HEK293T (cell line): ENCODE measurements at regions of chr7 and their contacts with region 1.

Region 1: GRCh38 chr7:151028131-151028947 is at the start of gene ABCB8:
- DNase-seq: peak; percentile 100

Region 2: GRCh38 chr7:151008511-151009323 is 19.6 kb before region 1 on chr7:
- CTCF ChIA-PET with region 1: interaction called, 5 read pairs
- POLR2A ChIA-PET with region 1: interaction called, 10 read pairs
- DNase-seq: peak; percentile 55

Region 3: GRCh38 chr7:151017953-151018420 is 10.4 kb before region 1 on chr7:
- CTCF ChIA-PET with region 1: interaction called, 40 read pairs
- POLR2A ChIA-PET with region 1: interaction called, 30 read pairs
- DNase-seq: peak; percentile 95

Region 4: DNA sequence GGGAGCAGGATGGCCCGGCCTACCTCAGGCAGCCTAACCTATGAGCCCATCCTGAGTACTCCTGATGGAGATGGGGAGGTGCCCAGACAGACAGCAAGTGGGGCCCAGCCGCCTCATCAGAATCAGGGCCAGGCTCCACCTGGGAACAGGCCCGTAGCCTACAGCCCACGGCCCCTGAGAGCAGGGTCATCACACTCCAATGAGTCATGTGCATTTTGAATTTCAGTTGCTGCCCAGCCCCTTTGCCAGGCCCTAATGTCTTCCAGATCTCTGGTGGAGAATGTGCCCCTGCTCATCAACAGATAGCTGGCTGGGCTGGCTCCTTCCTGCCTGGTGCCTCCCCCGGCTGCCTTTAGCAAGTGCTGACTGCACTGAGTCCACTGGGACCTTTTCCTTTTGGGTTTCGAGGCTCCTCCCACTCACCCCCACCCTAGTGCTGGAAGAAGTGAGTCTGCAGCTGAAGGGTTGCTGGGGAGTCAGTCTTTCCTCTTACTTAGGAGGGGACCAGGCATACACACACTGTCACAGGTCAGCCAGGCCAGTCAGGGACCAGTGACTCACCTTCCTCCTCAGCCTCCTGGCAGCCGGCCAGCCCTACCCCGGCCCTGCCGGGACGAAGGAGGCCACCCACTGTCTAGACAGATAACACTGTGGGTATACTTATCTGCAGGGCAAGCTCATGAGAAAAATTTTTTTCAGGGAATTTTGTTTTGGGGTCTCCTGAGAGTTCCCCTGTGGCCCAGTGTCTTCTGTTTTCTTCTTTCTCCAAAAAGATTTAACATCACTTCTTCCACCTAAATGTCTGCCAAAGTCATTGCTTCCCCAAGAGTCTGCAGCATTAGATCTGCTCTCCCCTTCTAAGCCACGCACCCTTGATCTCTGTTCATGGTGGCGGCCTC is 10.9 kb after region 1 on chr7:
- CTCF ChIA-PET with region 1: interaction called, 3 read pairs
- POLR2A ChIA-PET with region 1: interaction called, 23 read pairs
- DNase-seq: peak; percentile 72

Region 5: GRCh38 chr7:151057989-151058780 is 29.8 kb after region 1 on chr7:
- CTCF ChIA-PET with region 1: no interaction called
- POLR2A ChIA-PET with region 1: interaction called, 14 read pairs
- DNase-seq: peak; percentile 100

Region 6: DNA sequence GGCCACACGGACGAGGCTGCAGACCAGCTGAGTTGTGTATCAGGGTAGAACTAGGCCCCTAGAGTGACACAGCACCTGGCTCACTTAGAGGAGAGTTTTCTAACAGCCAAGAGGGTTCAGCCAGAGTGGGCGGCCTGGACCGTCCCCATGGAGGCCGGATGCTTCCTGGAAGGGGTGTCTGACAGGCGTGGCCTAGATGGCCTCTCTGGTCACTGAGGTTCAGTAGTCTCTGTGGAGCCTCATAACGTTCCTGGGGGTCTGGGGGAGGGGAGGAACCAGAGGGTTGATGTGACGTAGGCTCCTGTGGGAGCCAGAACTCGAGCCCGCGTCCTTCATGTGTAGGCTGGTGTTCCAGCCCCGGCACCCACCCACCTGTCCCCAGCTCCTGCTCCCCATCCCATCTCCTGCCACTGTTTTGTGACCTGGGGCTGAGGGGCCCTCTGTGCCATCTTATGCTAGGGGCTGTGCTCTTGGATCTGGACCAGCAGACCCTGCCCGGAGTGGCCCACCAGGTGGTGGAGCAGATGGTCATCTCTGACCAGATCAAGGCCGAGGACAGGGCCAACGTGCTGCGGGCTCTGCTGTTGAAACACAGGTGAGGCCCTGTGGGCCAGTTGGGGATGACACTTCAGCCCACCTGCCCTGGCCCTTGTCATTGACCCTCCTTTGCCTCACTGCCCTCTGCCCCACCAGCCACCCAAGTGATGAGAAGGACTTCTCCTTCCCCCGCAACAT is 41.3 kb after region 1 on chr7:
- CTCF ChIA-PET with region 1: no interaction called
- POLR2A ChIA-PET with region 1: no interaction called
- DNase-seq: no peak

Region 7: GRCh38 chr7:151080522-151081169 is 52.3 kb after region 1 on chr7 and contains the start of gene FASTK:
- CTCF ChIA-PET with region 1: no interaction called
- POLR2A ChIA-PET with region 1: interaction called, 15 read pairs
- DNase-seq: peak; percentile 97

Region 8: GRCh38 chr7:151110941-151111645 is 82.8 kb after region 1 on chr7:
- CTCF ChIA-PET with region 1: interaction called, 5 read pairs
- POLR2A ChIA-PET with region 1: interaction called, 10 read pairs
- DNase-seq: peak; percentile 93

Region 9: GRCh38 chr7:151131592-151132293 is 103.4 kb after region 1 on chr7:
- CTCF ChIA-PET with region 1: no interaction called
- POLR2A ChIA-PET with region 1: no interaction called
- DNase-seq: no peak